ENCODE measurements at regions of chr16 and their contacts with region 1.

Region 1: GRCh38 chr16:84617791-84618580 is at the start of gene COTL1:
- DNase-seq: peak; percentile 80 to 97 (median 92)
- ATAC-seq: peak; percentile 83 to 89
- H3K4me3 Mint-ChIP-seq: peak within 1 kb of the TSS; percentile 90 to 97 (median 96)
- H3K27ac Mint-ChIP-seq: peak within 1 kb of the TSS; percentile 82 to 95 (median 92)
- H3K4me1 Mint-ChIP-seq: peaks cover 34 to 63% (median 50%) of the 10 kb centered on the region in 4 donors
- H3K27me3 Mint-ChIP-seq: no peaks in the 10 kb centered on the region
- polyA plus RNA-seq, gene COTL1: 341 to 512 (median 425) TPM

Region 2: GRCh38 chr16:84511180-84511824 is 106.7 kb before region 1 on chr16:
- POLR2A ChIA-PET with region 1: interaction called, 49 read pairs
- DNase-seq: peak; percentile 63 to 91 (median 86)
- ATAC-seq: peak; percentile 20 to 21
- H3K4me3 Mint-ChIP-seq: peak overlapping the region in 8 of 10 donors; percentile 3 to 64 (median 52)
- H3K27ac Mint-ChIP-seq: peak overlapping the region in 9 of 10 donors; percentile 80 to 92 (median 86)
- H3K4me1 Mint-ChIP-seq: peaks cover 33 to 87% (median 71%) of the 10 kb centered on the region in 4 donors
- H3K27me3 Mint-ChIP-seq: no peaks in the 10 kb centered on the region

Region 3: GRCh38 chr16:84532291-84532724 is 85.7 kb before region 1 on chr16:
- POLR2A ChIA-PET with region 1: no interaction called
- DNase-seq: no peak
- ATAC-seq: no peak
- H3K4me3 Mint-ChIP-seq: no peak overlapping the region
- H3K27ac Mint-ChIP-seq: peak overlapping the region in 2 of 10 donors; percentile 6 to 78
- H3K4me1 Mint-ChIP-seq: peaks cover 7 to 37% (median 10%) of the 10 kb centered on the region in 4 donors
- H3K27me3 Mint-ChIP-seq: no peaks in the 10 kb centered on the region

Region 4: DNA sequence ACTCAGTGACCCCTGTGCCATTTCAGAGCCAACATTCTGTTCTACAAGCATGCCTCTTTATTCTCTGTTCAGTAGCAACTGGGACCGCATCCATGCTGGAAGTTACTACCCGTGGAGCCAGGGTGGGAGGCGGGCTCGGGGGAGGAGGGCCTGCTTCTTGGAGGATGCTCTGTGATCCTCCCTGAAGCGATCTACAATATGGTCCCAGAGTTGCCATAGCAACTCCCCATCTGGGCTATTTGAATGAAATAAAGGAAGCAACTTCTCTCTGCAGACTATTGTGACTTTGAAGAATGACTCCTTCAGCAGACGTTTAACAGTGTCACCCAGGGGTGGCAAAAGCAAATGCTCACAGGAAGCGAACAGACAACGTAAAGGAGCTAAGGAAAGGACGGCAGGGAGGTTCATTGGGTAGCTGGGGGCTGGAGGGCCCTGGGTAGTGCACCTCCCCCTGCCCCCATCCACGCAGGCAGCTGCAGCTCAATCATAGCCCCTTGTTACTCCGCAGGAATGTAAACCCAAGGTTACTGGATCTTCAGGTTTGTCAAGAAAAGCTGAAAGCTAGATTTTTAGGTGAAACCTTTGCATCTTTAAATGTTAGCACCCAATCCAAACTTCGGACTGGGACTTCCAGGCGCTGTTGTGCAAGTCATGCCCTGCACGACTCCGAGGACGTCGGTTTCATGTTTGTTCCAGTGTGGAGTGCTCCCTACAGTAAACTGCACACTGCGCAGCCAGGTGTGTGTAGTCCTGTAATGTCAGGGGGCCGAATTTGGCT is 62.4 kb before region 1 on chr16:
- POLR2A ChIA-PET with region 1: interaction called, 12 read pairs
- DNase-seq: peak in 3 of 10 donors; percentile 18 to 44 (median 32)
- ATAC-seq: peak in 1 of 2 donors; percentile 21
- H3K4me3 Mint-ChIP-seq: peak overlapping the region in 1 of 10 donors; percentile 6
- H3K27ac Mint-ChIP-seq: peak overlapping the region in 9 of 10 donors; percentile 4 to 82 (median 49)
- H3K4me1 Mint-ChIP-seq: peaks cover 28 to 47% (median 40%) of the 10 kb centered on the region in 4 donors
- H3K27me3 Mint-ChIP-seq: no peaks in the 10 kb centered on the region

Region 5: GRCh38 chr16:84599521-84600202 is 18.3 kb before region 1 on chr16:
- POLR2A ChIA-PET with region 1: interaction called, 141 read pairs
- DNase-seq: peak in 8 of 10 donors; percentile 26 to 75 (median 41)
- ATAC-seq: peak; percentile 49 to 51
- H3K4me3 Mint-ChIP-seq: peak overlapping the region; percentile 79 to 96 (median 89)
- H3K27ac Mint-ChIP-seq: peak overlapping the region; percentile 89 to 99 (median 96)
- H3K4me1 Mint-ChIP-seq: peaks cover 53 to 91% (median 88%) of the 10 kb centered on the region in 4 donors
- H3K27me3 Mint-ChIP-seq: no peaks in the 10 kb centered on the region

Region 6: GRCh38 chr16:84726079-84726668 is 108.2 kb after region 1 on chr16:
- POLR2A ChIA-PET with region 1: interaction called, 11 read pairs
- DNase-seq: peak; percentile 66 to 90 (median 80)
- ATAC-seq: peak; percentile 83 to 87
- H3K4me3 Mint-ChIP-seq: peak overlapping the region in 9 of 10 donors; percentile 11 to 81 (median 58)
- H3K27ac Mint-ChIP-seq: peak overlapping the region in 6 of 10 donors; percentile 14 to 83 (median 61)
- H3K4me1 Mint-ChIP-seq: peaks cover 41 to 86% (median 71%) of the 10 kb centered on the region in 4 donors
- H3K27me3 Mint-ChIP-seq: no peaks in the 10 kb centered on the region